Activated CD8-positive, alpha-beta T cell treated with anti-CD3 and anti-CD28 coated beads for 36 hours (primary cell): ENCODE measurements at regions of chr1 and their contacts with region 1.

Region 1: GRCh38 chr1:229258031-229258756 is 12.7 kb upstream of the RAB4A start:
- DNase-seq: peak; percentile 71
- ATAC-seq: peak; percentile 26
- H3K4me3 Mint-ChIP-seq: no peak overlapping the region
- H3K27ac Mint-ChIP-seq: no peak overlapping the region
- H3K4me1 Mint-ChIP-seq: peaks cover 26% of the 10 kb centered on the region
- H3K27me3 Mint-ChIP-seq: no peaks in the 10 kb centered on the region
- CTCF ChIP-seq: peak; percentile 96

Region 2: DNA sequence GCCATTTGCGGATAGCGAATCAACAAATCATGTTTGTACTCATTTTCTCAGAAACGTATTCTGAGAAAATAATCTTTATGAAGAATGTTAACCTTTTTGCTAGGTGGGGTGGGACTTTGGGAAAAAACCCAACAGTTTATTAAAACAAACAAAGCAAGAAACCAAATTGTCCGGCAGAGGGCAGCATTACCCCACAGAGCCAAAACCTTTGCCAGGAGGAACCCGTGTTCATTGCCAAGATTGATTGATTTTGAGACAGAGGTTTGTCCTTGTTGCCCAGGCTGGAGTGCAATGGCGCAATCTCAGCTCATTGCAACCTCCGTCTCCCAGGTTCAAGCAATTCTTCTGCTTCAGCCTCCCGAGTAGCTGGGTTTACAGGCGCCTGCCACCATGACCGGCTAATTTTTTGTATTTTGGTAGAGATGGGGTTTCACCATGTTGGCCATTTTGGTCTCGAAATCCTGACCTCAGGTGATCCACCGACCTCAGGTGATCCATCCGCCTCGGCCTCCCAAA is 593.7 kb before region 1 on chr1:
- CTCF ChIA-PET with region 1: interaction called, 17 read pairs
- POLR2A ChIA-PET with region 1: no interaction called
- intact Hi-C with region 1: no loop called
- DNase-seq: peak; percentile 88
- ATAC-seq: peak; percentile 30
- H3K4me3 Mint-ChIP-seq: no peak overlapping the region
- H3K27ac Mint-ChIP-seq: no peak overlapping the region
- H3K4me1 Mint-ChIP-seq: no peaks in the 10 kb centered on the region
- H3K27me3 Mint-ChIP-seq: peaks cover 3% of the 10 kb centered on the region
- CTCF ChIP-seq: peak; percentile 91

Region 3: DNA sequence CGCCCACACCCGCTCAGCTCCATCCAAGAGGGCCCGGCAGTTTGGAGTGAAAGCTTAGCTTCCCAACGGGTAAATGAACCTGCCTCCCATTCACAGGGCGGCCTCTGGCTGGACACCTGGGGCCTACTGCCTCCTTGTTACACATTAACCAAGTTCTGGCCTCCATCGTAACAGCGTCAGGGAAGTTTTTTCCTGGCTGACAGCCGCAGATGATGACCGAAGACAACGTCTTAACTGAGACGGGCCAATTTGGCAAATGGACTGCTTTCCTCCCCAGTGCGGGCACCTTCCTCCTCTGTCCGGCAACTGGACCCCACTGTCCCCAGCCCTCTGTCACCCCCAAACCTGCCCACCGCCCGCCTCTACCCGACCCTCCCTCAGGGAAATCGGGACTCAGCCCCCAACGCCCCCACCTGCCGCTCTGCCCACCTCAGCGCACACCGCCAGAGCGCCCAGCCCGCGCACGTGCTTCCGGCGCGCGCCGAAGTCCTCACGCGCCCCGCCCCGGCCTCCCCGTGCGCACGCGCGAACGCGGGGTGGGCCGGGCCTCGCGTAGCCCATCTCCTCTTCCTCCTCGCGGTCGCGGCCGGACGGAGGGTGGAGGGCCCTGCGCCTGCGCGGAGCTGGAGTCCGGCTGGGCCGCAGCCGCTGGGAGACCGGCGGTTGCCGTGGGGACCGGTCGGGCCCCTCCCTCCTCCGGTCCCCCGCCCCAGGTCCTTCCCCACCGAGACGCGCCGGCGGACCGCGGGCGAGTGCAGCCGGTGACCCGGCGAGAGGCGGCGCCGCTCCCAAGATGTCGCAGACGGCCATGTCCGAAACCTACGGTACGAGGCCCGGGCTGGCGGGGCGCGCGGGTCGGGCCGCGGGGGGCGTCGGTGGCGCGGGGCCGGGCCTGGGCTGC is 12.6 kb after region 1 on chr1 and contains the start of gene RAB4A:
- CTCF ChIA-PET with region 1: interaction called, 12 read pairs
- POLR2A ChIA-PET with region 1: interaction called, 4 read pairs
- intact Hi-C with region 1: no loop called
- DNase-seq: peak; percentile 75
- ATAC-seq: peak; percentile 91
- H3K4me3 Mint-ChIP-seq: peak within 1 kb of the TSS; percentile 88
- H3K27ac Mint-ChIP-seq: peak within 1 kb of the TSS; percentile 78
- H3K4me1 Mint-ChIP-seq: peaks cover 25% of the 10 kb centered on the region
- H3K27me3 Mint-ChIP-seq: no peaks in the 10 kb centered on the region
- CTCF ChIP-seq: no peak
- total RNA-seq, gene RAB4A: 27.2 to 30.6 TPM

Region 4: DNA sequence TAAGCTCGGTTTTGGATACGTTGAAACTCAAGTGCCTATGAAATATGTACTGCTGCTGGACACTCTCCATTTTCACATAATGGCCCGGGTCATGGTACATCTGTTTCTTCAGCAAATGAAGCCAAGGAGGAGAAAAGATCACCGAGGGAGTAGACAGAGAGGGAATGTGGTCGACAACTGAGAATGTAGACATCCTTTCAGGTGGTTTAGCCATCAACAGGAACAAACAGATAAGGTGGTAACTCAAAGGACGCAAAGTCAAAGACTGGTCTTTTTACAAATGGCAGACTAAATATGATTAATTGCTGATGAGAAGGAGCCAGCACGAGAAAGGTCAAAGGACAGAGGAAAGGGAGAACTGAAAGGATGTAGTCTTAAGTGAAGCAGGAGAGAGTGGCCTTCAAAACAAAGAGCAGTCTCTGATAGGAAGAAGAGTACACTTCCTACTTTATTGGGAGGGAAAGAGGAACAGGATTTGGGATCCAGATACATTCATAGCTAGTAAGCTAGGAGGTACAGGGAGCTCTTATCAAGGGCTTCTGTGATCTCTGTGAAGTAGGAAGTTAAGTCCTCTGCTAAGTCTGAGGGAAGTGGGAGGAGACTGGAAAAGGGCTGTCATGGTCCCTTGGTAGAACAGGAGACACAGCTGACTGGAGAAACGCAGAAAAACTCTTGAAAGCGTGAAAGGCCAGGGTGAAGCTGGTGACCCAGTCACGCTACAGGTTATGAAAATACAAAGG is 221.6 kb after region 1 on chr1:
- CTCF ChIA-PET with region 1: interaction called, 100 read pairs
- POLR2A ChIA-PET with region 1: no interaction called
- intact Hi-C with region 1: loop called (anchors 10 kb)
- DNase-seq: peak; percentile 5
- ATAC-seq: no peak
- H3K4me3 Mint-ChIP-seq: no peak overlapping the region
- H3K27ac Mint-ChIP-seq: no peak overlapping the region
- H3K4me1 Mint-ChIP-seq: peaks cover 9% of the 10 kb centered on the region
- H3K27me3 Mint-ChIP-seq: no peaks in the 10 kb centered on the region
- CTCF ChIP-seq: no peak

Region 5: GRCh38 chr1:229514578-229515275 is 256.5 kb after region 1 on chr1:
- CTCF ChIA-PET with region 1: interaction called, 15 read pairs
- POLR2A ChIA-PET with region 1: no interaction called
- intact Hi-C with region 1: loop called (anchors 1 kb)
- DNase-seq: peak; percentile 66
- ATAC-seq: peak; percentile 88
- H3K4me3 Mint-ChIP-seq: no peak overlapping the region
- H3K27ac Mint-ChIP-seq: no peak overlapping the region
- H3K4me1 Mint-ChIP-seq: peaks cover 8% of the 10 kb centered on the region
- H3K27me3 Mint-ChIP-seq: no peaks in the 10 kb centered on the region
- CTCF ChIP-seq: peak; percentile 90